ENCODE measurements at regions of chr3 and their contacts with region 1.

Region 1: DNA sequence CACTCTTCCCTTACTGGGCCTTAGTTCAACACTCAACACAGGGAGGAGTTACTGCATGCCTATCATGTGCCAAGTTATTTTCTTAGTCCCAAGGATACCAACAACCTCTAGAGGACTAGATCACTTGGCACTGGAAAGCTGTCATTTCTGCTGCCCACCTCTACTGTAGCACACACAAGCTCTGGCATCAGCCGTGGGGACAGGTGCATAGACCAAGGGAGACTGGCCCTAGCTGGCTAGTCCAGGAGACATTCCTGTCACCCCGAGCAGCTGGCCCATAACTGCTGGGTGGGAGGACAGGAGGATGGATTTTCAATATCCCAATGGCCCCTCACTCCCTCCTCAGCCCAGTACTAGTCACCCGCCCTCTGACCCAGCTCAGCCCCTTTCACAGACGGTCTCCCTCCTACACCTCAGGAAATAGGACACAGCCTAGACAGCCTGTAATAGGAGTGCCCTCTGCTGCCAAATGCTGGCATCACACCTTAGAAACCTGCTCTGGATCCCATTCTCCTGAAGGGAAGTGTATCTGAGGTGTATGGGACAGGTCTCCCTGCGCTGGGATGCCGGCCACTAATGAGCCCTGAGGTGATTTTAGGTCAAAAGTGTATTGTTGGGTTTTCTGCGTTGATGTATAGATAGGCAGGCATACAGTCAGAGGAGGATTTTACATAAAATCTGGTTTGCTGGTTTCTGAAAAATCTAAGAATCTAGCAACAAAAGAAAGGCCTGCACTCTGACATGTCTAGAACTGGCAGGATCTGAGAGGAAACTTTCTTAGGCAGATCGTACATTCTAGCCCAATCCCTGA is 3.4 kb upstream of the DZIP1L start:
- DNase-seq: peak; percentile 79 to 89
- ATAC-seq: peak; percentile 71
- H3K4me3 ChIP-seq: no peak overlapping the region
- H3K27ac ChIP-seq: no peak overlapping the region
- H3K4me1 ChIP-seq: peaks cover 0 to 2% of the 10 kb centered on the region in 2 donors
- H3K27me3 ChIP-seq: no peaks in the 10 kb centered on the region

Region 2: GRCh38 chr3:137970914-137971831 is 147.6 kb before region 1 on chr3:
- intact Hi-C with region 1: no loop called
- DNase-seq: peak; percentile 83 to 90
- ATAC-seq: peak; percentile 86
- H3K4me3 ChIP-seq: no peak overlapping the region
- H3K27ac ChIP-seq: no peak overlapping the region
- H3K4me1 ChIP-seq: no peaks in the 10 kb centered on the region
- H3K27me3 ChIP-seq: no peaks in the 10 kb centered on the region

Region 3: DNA sequence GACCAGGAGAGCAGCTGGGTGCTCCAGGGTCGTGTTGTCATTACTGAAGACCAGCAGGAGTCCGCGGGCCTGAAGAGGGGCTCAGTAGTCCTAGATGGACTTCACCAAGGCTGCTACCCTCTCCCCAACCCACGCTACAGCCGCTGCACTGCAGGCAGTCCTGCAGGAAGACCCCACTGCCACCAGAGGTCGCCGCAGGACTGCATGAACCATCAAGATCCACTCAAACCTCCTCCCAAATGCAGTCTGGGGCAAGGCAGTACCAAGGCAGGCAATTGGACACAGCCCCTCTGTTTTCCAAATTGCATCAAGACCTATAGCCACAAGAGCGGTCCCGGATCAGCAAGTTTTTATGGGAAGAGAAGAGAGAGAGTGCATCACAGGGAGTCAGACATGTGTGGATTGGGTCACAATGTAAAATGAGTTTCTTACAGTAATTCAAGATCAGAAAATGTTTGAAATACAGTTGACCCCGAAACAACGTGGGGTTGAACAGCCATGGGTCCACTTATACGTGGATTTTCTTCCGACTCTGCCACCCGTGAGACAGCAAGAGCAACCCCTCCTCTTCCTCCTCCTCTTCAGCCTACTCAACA is 50.1 kb before region 1 on chr3:
- intact Hi-C with region 1: loop called (anchors 1 kb)
- DNase-seq: peak; percentile 87 to 93
- ATAC-seq: peak; percentile 91
- H3K4me3 ChIP-seq: no peak overlapping the region
- H3K27ac ChIP-seq: no peak overlapping the region
- H3K4me1 ChIP-seq: no peaks in the 10 kb centered on the region
- H3K27me3 ChIP-seq: no peaks in the 10 kb centered on the region

Region 4: DNA sequence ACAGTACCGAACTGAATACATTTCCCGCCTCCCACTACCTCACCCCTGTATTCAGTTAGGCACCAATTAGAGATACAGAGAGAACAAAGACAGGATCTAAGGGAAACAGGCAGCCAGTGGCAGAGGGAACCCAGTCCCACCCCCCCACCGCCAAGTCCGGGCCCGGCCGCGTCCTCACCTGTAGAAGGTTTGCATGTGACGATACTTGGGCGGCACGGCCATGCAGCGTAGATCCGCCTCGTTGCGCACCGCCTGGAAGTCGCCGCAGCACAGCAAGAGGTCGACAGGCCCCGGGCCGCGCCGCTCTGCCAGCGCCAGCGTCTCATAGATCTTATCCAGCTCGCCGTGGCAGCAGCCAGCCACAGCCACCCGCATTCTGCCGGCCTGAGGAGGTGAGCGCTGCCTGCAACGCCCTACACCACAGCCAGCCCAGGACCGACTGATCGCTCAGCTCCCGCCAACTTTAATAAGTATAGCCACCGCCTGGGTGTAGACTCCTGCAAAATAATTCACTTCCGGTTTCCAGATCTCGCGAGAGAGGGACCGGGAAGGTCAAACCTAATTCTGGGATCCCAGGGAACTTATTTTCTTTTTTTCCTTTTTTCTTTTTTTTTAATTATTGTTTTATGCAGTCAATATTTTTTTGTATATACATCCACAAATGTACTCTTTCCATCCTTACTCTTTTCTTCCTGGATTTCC is 55.8 kb after region 1 on chr3 and contains the start of gene DBR1:
- intact Hi-C with region 1: loop called in 1 of 2 experiments (anchors 10 kb)
- DNase-seq: peak; percentile 78 to 88
- ATAC-seq: peak; percentile 95
- H3K4me3 ChIP-seq: peak within 1 kb of the TSS; percentile 13 to 64
- H3K27ac ChIP-seq: peak within 1 kb of the TSS in 1 of 2 donors; percentile 34
- H3K4me1 ChIP-seq: peaks cover 0 to 3% of the 10 kb centered on the region in 2 donors
- H3K27me3 ChIP-seq: no peaks in the 10 kb centered on the region
- total RNA-seq, gene DBR1: 11.1 to 15.3 TPM

Region 5: GRCh38 chr3:138186803-138187295 is 68.0 kb after region 1 on chr3:
- intact Hi-C with region 1: no loop called
- DNase-seq: peak; percentile 92 to 95
- ATAC-seq: peak; percentile 98
- H3K4me3 ChIP-seq: peak overlapping the region; percentile 71 to 78
- H3K27ac ChIP-seq: peak overlapping the region in 1 of 2 donors; percentile 85
- H3K4me1 ChIP-seq: peaks cover 0 to 3% of the 10 kb centered on the region in 2 donors
- H3K27me3 ChIP-seq: no peaks in the 10 kb centered on the region

Region 6: DNA sequence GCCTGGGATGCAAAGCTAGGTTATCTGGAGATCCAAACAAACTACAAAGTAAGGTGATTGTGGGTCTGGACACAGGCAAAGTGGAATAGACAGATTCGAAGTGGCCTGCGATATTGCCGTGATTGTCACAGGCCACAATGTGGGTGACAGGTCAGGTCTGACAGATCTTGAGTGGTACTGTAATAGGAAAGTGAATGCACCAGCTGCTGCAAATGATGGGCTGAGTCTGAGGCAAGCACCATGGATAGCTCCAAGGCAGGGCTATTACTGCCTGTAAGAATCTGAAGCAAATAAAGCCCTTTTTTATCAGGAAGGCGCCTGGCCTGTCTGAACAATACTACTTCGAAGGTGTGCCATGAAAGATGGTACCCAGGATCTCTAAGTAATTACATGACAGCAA is 78.2 kb after region 1 on chr3:
- intact Hi-C with region 1: no loop called
- DNase-seq: no peak
- ATAC-seq: no peak
- H3K4me3 ChIP-seq: no peak overlapping the region
- H3K27ac ChIP-seq: no peak overlapping the region
- H3K4me1 ChIP-seq: no peaks in the 10 kb centered on the region
- H3K27me3 ChIP-seq: no peaks in the 10 kb centered on the region

Measured in aorta (tissue), 5 donors.